ENCODE measurements at regions of chr1 and their contacts with region 1.

Region 1: GRCh38 chr1:27581823-27582243 is 22.1 kb downstream of the AHDC1 start:
- DNase-seq: no peak
- H3K4me3 ChIP-seq: no peak overlapping the region
- H3K27ac ChIP-seq: no peak overlapping the region
- H3K4me1 ChIP-seq: peaks cover 1 to 11% of the 10 kb centered on the region in 2 experiments; a peak in 2 of 4 replicates
- H3K27me3 ChIP-seq: no peaks in the 10 kb centered on the region
- CTCF ChIP-seq: no peak
- EP300 ChIP-seq: no peak
- RAD21 ChIP-seq: no peak

Region 2: DNA sequence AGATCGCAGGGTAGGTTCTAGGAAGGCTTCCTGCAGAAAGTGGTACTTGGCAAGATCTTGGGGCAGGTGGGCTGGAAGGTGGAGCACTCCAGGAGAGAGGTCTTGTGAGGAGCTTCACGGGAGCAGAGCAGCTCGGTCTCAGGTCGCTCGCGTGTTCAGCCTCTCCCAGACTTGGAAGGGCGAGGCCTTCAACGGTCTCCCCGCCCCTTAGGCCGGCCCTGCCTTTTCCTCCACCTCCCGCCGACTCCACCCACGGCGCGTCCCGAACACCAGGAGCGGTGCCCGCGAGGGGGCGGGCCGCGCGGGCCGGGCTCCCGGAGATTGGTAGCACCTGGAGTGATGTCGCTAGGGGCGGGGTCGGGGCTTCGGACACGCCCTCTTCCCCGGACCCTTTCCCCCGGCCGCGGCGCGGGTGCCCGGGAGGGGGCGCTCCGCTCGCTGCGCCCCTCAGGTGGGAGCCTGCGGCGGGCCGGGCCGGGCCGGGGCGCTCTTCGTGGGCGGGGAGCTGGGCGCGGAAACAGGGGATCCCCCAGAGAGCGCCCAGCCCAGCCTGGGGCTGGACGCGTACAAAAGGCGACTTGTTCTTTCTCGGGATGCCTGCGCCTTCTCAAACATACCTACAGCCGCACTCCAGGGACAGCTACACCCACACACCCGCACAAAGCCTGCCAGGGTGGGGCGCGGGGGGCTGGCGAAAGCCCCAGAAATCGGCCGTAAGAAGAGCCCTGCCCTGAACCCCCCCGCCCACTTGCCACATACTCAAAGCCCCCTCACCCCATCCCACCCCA is 13.3 kb before region 1 on chr1:
- CTCF ChIA-PET with region 1: interaction called, 17 read pairs
- POLR2A ChIA-PET with region 1: no interaction called
- DNase-seq: peak; percentile 99
- H3K4me3 ChIP-seq: peak overlapping the region in 1 of 2 experiments; percentile 28; a peak in 2 of 4 replicates
- H3K27ac ChIP-seq: no peak overlapping the region
- H3K4me1 ChIP-seq: peaks cover 52 to 77% of the 10 kb centered on the region in 2 experiments; a peak in 3 of 4 replicates
- H3K27me3 ChIP-seq: no peaks in the 10 kb centered on the region
- CTCF ChIP-seq: peak; percentile 70
- EP300 ChIP-seq: no peak
- RAD21 ChIP-seq: peak; percentile 16; the same call in 1 of the 2 replicates

Region 3: GRCh38 chr1:27643701-27644625 is 62.1 kb after region 1 on chr1:
- CTCF ChIA-PET with region 1: no interaction called
- POLR2A ChIA-PET with region 1: no interaction called
- DNase-seq: peak; percentile 67
- H3K4me3 ChIP-seq: no peak overlapping the region
- H3K27ac ChIP-seq: no peak overlapping the region
- H3K4me1 ChIP-seq: peaks cover 0 to 4% of the 10 kb centered on the region in 2 experiments; a peak in 1 of 4 replicates
- H3K27me3 ChIP-seq: no peaks in the 10 kb centered on the region
- CTCF ChIP-seq: peak; percentile 68
- EP300 ChIP-seq: no peak
- RAD21 ChIP-seq: peak; percentile 53